ENCODE measurements at regions of chr9 and their contacts with region 1.

Region 1: GRCh38 chr9:131739980-131740648 is at the start of gene RAPGEF1:
- DNase-seq: no peak
- H3K4me3 ChIP-seq: peak within 1 kb of the TSS; percentile 36 to 84 (median 75)
- H3K27ac ChIP-seq: peak within 1 kb of the TSS; percentile 73
- H3K4me1 ChIP-seq: peaks cover 32% of the 10 kb centered on the region
- H3K27me3 ChIP-seq: no peaks in the 10 kb centered on the region
- CTCF ChIP-seq: peak; percentile 75 to 77
- POLR2A ChIP-seq: no peak
- total RNA-seq, gene RAPGEF1: 124 TPM in 2 replicates

Region 2: GRCh38 chr9:131635285-131635684 is 104.8 kb before region 1 on chr9:
- CTCF ChIA-PET with region 1: interaction called, 8 read pairs
- POLR2A ChIA-PET with region 1: no interaction called
- dilution Hi-C with region 1: no loop called
- intact Hi-C with region 1: loop called (anchors 1 kb)
- DNase-seq: peak; percentile 99
- H3K4me3 ChIP-seq: no peak overlapping the region
- H3K27ac ChIP-seq: peak overlapping the region; percentile 93
- H3K4me1 ChIP-seq: peaks cover 24% of the 10 kb centered on the region
- H3K27me3 ChIP-seq: no peaks in the 10 kb centered on the region
- CTCF ChIP-seq: peak in 1 of 2 donors; percentile 11
- POLR2A ChIP-seq: no peak

Region 3: DNA sequence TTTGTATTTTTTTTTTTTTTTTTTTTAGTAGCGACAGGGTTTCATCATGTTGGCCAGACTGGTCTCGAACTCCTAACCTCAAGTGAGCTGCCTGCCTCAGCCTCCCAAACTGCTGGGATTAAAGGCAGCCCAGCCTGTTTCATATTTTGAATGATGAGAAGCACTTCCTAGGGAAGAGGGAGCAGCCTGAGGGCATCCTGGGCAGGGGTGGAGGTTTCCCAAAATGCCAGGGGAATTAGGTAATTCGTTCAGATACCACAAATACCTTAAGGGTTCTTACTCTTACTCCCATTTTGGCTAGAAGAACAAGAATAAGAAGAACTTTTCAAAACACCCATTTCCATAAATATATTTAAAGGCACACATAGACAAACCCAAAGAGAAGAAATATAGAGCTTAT is 29.2 kb after region 1 on chr9:
- CTCF ChIA-PET with region 1: no interaction called
- POLR2A ChIA-PET with region 1: no interaction called
- dilution Hi-C with region 1: no loop called
- intact Hi-C with region 1: no loop called
- DNase-seq: no peak
- H3K4me3 ChIP-seq: no peak overlapping the region
- H3K27ac ChIP-seq: no peak overlapping the region
- H3K4me1 ChIP-seq: no peaks in the 10 kb centered on the region
- H3K27me3 ChIP-seq: peaks cover 0 to 4% of the 10 kb centered on the region in 2 experiments
- CTCF ChIP-seq: no peak
- POLR2A ChIP-seq: no peak

Region 4: GRCh38 chr9:132381966-132382541 is 641.9 kb after region 1 on chr9:
- CTCF ChIA-PET with region 1: no interaction called
- POLR2A ChIA-PET with region 1: no interaction called
- dilution Hi-C with region 1: no loop called
- intact Hi-C with region 1: no loop called
- DNase-seq: no peak
- H3K4me3 ChIP-seq: no peak overlapping the region
- H3K27ac ChIP-seq: no peak overlapping the region
- H3K4me1 ChIP-seq: no peaks in the 10 kb centered on the region
- H3K27me3 ChIP-seq: no peaks in the 10 kb centered on the region
- CTCF ChIP-seq: no peak
- POLR2A ChIP-seq: no peak